Activated naive CD4-positive, alpha-beta T cell treated with anti-CD3 and anti-CD28 coated beads for 36 hours (primary cell): ENCODE measurements at regions of chr2 and their contacts with region 1.

Region 1: GRCh38 chr2:98444436-98445176 is at the start of gene INPP4A:
- DNase-seq: peak; percentile 69
- H3K4me3 Mint-ChIP-seq: peak within 1 kb of the TSS; percentile 87
- H3K27ac Mint-ChIP-seq: peak within 1 kb of the TSS; percentile 88
- H3K4me1 Mint-ChIP-seq: peaks cover 38% of the 10 kb centered on the region
- H3K27me3 Mint-ChIP-seq: no peaks in the 10 kb centered on the region
- total RNA-seq, gene INPP4A: 33.1 to 34.8 TPM

Region 2: GRCh38 chr2:98455494-98455976 is 10.9 kb after region 1 on chr2:
- CTCF ChIA-PET with region 1: interaction called, 12 read pairs
- intact Hi-C with region 1: loop called (anchors 1 kb)
- DNase-seq: peak; percentile 66
- H3K4me3 Mint-ChIP-seq: peak overlapping the region; percentile 59
- H3K27ac Mint-ChIP-seq: peak overlapping the region; percentile 89
- H3K4me1 Mint-ChIP-seq: peaks cover 98% of the 10 kb centered on the region
- H3K27me3 Mint-ChIP-seq: no peaks in the 10 kb centered on the region

Region 3: GRCh38 chr2:98518090-98518489 is 73.5 kb after region 1 on chr2:
- CTCF ChIA-PET with region 1: interaction called, 5 read pairs
- intact Hi-C with region 1: loop called (anchors 5 kb)
- DNase-seq: peak; percentile 78
- H3K4me3 Mint-ChIP-seq: no peak overlapping the region
- H3K27ac Mint-ChIP-seq: no peak overlapping the region
- H3K4me1 Mint-ChIP-seq: peaks cover 47% of the 10 kb centered on the region
- H3K27me3 Mint-ChIP-seq: no peaks in the 10 kb centered on the region